ENCODE measurements at regions of chr19 and their contacts with region 1.

Region 1: GRCh38 chr19:12796146-12797071 is 5.1 kb downstream of the JUNB start:
- DNase-seq: peak; percentile 68 to 86 (median 79)
- ATAC-seq: peak; percentile 14
- H3K4me3 ChIP-seq: peak overlapping the region; percentile 44
- H3K4me3 Mint-ChIP-seq: peak overlapping the region; percentile 55 to 87 (median 80)
- H3K27ac ChIP-seq: peak overlapping the region; percentile 56
- H3K27ac Mint-ChIP-seq: peak overlapping the region; percentile 87 to 100 (median 91)
- H3K4me1 ChIP-seq: peaks cover 21 to 30% of the 10 kb centered on the region in 2 donors
- H3K4me1 Mint-ChIP-seq: peaks cover 19 to 42% (median 37%) of the 10 kb centered on the region in 7 donors
- H3K27me3 ChIP-seq: no peaks in the 10 kb centered on the region
- H3K27me3 Mint-ChIP-seq: peaks cover 0 to 2% (median 0%) of the 10 kb centered on the region in 5 donors

Region 2: DNA sequence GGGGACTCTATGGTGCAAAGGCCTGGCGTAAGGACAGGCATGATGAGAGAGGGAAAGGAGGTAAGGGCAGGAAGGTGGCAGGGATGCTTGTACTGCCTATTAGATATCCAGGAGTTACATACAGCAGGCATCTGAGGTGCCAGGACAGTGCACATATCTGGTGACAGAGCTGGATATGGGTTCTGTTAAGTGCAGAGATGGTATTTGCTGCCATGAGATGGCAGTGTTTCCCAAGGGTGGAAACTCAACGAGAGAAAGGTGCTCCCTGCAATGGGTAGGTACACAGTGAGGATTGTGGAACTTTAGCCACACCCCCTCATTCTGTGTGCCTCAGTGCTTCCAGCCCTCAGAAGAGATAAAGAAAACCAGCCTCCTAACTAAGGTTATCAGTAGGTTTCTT is 79.5 kb before region 1 on chr19:
- CTCF ChIA-PET with region 1: interaction called, 6 read pairs
- POLR2A ChIA-PET with region 1: interaction called, 33 read pairs
- intact Hi-C with region 1: loop called (anchors 1 kb)
- DNase-seq: peak in 7 of 9 donors; percentile 35 to 66 (median 55)
- ATAC-seq: peak; percentile 86
- H3K4me3 ChIP-seq: no peak overlapping the region
- H3K4me3 Mint-ChIP-seq: peak overlapping the region in 1 of 10 donors; percentile 51
- H3K27ac ChIP-seq: no peak overlapping the region
- H3K27ac Mint-ChIP-seq: peak overlapping the region in 6 of 9 donors; percentile 10 to 85 (median 68)
- H3K4me1 ChIP-seq: peaks cover 6 to 8% of the 10 kb centered on the region in 2 donors
- H3K4me1 Mint-ChIP-seq: peaks cover 13 to 29% (median 19%) of the 10 kb centered on the region in 7 donors
- H3K27me3 ChIP-seq: no peaks in the 10 kb centered on the region
- H3K27me3 Mint-ChIP-seq: no peaks in the 10 kb centered on the region

Region 3: DNA sequence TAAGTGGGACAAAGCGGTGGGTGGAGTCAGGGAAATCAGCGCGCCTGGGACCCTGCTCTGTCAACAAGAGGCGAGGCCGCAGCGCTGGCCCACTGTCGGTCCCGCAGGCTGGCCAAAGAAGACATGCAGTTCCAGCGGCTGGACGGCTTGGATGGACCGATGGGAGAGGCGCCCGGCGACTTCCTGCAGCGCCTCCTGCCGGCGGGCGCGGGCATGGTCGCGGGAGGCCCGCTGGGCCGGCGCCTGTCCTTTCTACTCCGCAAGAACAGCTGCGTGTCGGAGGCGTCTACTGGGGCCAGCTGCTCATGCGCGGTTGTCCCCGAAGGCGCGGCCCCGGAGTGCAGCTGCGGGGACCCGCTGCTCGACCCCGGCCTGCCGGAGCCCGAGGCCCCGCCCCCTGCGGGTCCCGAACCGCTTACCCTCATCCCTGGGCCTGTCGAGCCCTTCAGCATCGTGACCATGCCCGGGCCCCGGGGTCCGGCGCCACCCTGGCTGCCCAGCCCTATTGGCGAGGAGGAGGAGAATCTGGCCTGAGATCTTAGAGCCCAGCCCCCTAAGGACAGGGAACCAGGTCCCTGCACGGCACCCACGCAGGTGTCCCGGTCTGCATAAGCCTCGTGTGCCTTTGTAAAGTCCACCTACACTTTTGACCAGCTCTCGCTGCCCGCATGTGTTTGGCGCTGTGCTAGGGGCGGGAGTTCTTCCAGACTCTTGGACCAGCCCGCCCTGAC is 38.7 kb before region 1 on chr19:
- CTCF ChIA-PET with region 1: interaction called, 111 read pairs
- POLR2A ChIA-PET with region 1: interaction called, 3 read pairs
- intact Hi-C with region 1: loop called in 1 of 2 experiments (anchors 1 kb)
- DNase-seq: peak in 8 of 9 donors; percentile 40 to 84 (median 57)
- ATAC-seq: peak; percentile 87
- H3K4me3 ChIP-seq: peak overlapping the region; percentile 27
- H3K4me3 Mint-ChIP-seq: peak overlapping the region in 8 of 10 donors; percentile 13 to 64 (median 46)
- H3K27ac ChIP-seq: no peak overlapping the region
- H3K27ac Mint-ChIP-seq: no peak overlapping the region
- H3K4me1 ChIP-seq: peaks cover 0 to 7% of the 10 kb centered on the region in 2 donors
- H3K4me1 Mint-ChIP-seq: peaks cover 0 to 10% (median 8%) of the 10 kb centered on the region in 7 donors
- H3K27me3 ChIP-seq: no peaks in the 10 kb centered on the region
- H3K27me3 Mint-ChIP-seq: peaks cover 10 to 20% (median 11%) of the 10 kb centered on the region in 5 donors

Region 4: GRCh38 chr19:12777217-12778016 is 19.0 kb before region 1 on chr19:
- CTCF ChIA-PET with region 1: interaction called, 169 read pairs
- POLR2A ChIA-PET with region 1: interaction called, 621 read pairs
- intact Hi-C with region 1: loop called (anchors 1 kb)
- DNase-seq: peak; percentile 69 to 89 (median 82)
- ATAC-seq: peak; percentile 18
- H3K4me3 ChIP-seq: peak overlapping the region; percentile 76
- H3K4me3 Mint-ChIP-seq: peak overlapping the region; percentile 82 to 95 (median 87)
- H3K27ac ChIP-seq: peak overlapping the region; percentile 94
- H3K27ac Mint-ChIP-seq: peak overlapping the region; percentile 42 to 98 (median 94)
- H3K4me1 ChIP-seq: peaks cover 16 to 28% of the 10 kb centered on the region in 2 donors
- H3K4me1 Mint-ChIP-seq: peaks cover 20 to 45% (median 39%) of the 10 kb centered on the region in 7 donors
- H3K27me3 ChIP-seq: no peaks in the 10 kb centered on the region
- H3K27me3 Mint-ChIP-seq: no peaks in the 10 kb centered on the region

Region 5: GRCh38 chr19:12847159-12848139 is 51.0 kb after region 1 on chr19:
- CTCF ChIA-PET with region 1: interaction called, 8 read pairs
- POLR2A ChIA-PET with region 1: interaction called, 5 read pairs
- intact Hi-C with region 1: loop called (anchors 1 to 2 kb)
- DNase-seq: peak; percentile 46 to 99 (median 72)
- ATAC-seq: peak; percentile 99
- H3K4me3 ChIP-seq: no peak overlapping the region
- H3K4me3 Mint-ChIP-seq: peak overlapping the region in 9 of 10 donors; percentile 41 to 70 (median 50)
- H3K27ac ChIP-seq: no peak overlapping the region
- H3K27ac Mint-ChIP-seq: peak overlapping the region in 1 of 9 donors; percentile 28
- H3K4me1 ChIP-seq: peaks cover 7 to 9% of the 10 kb centered on the region in 2 donors
- H3K4me1 Mint-ChIP-seq: peaks cover 0 to 4% (median 0%) of the 10 kb centered on the region in 7 donors
- H3K27me3 ChIP-seq: peaks cover 0 to 13% of the 10 kb centered on the region in 2 donors
- H3K27me3 Mint-ChIP-seq: peaks cover 9 to 39% (median 28%) of the 10 kb centered on the region in 5 donors